ENCODE measurements at regions of chr15 and their contacts with region 1.

Region 1: GRCh38 chr15:78979456-78980320 is 34.8 kb upstream of the CTSH start:
- DNase-seq: peak; percentile 55
- H3K4me3 Mint-ChIP-seq: no peak overlapping the region
- H3K27ac Mint-ChIP-seq: no peak overlapping the region
- H3K4me1 Mint-ChIP-seq: peaks cover 11% of the 10 kb centered on the region
- H3K27me3 Mint-ChIP-seq: no peaks in the 10 kb centered on the region

Region 2: DNA sequence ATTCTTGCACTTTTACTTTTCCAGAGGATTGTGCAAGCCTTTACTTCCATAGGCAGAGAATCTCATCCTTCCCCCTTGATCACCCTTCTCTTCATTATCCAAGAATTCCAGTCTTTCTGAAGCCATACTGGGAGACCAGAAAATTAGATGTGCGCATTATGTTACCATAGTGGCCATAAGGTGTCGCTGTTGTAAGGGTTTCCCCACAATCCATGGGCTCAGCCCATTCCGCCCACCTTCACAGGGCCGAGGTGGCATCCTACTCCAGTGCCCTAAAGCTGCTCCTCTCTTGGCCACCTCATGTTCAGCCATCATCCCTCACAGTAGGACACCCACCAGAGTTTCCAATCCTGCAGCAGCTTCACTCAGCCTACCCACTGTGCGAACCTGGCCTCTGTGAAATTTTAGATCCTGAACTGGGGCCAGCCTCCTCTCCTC is 69.9 kb before region 1 on chr15:
- CTCF ChIA-PET with region 1: interaction called, 74 read pairs
- POLR2A ChIA-PET with region 1: no interaction called
- intact Hi-C with region 1: loop called (anchors 5 kb)
- DNase-seq: peak; percentile 47
- H3K4me3 Mint-ChIP-seq: no peak overlapping the region
- H3K27ac Mint-ChIP-seq: peak overlapping the region; percentile 53
- H3K4me1 Mint-ChIP-seq: peaks cover 23% of the 10 kb centered on the region
- H3K27me3 Mint-ChIP-seq: no peaks in the 10 kb centered on the region

Region 3: GRCh38 chr15:78938658-78939488 is 40.8 kb before region 1 on chr15:
- CTCF ChIA-PET with region 1: interaction called, 6 read pairs
- POLR2A ChIA-PET with region 1: no interaction called
- intact Hi-C with region 1: loop called (anchors 5 kb)
- DNase-seq: peak; percentile 71
- H3K4me3 Mint-ChIP-seq: peak overlapping the region; percentile 55
- H3K27ac Mint-ChIP-seq: peak overlapping the region; percentile 92
- H3K4me1 Mint-ChIP-seq: peaks cover 58% of the 10 kb centered on the region
- H3K27me3 Mint-ChIP-seq: no peaks in the 10 kb centered on the region

Region 4: DNA sequence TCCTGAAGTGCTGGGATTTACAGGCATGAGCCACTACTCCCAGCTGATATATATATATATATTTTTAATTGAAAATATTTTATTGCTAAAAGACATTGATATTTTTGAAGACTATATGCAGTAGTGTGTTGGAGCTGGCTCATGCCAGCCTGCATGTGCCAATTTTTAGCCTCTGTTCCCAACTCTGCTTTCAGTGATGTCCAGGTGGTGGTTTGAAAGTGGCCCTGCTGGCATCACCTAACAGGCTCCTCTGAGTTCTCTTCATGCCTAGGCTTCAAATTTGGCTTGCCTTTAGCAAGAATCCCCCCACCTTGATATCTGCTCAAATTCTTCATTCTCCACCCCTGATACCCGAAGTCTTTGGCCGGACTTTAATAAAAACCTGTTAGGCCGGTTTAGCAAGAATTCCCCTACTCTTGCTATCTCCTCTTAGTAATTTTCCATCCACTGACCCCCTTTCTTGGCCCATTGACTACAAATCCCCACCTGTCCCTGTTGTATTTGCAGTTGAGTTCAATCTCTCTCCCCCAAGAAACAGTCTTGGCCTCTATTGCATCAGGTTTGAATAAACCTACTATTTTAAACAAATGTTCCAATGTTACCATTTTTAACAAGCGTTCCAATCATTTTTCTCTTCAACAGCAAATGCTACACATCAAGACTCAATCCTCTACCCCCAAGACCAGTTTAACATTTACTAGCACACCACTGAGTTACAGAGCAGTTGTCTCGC is 11.0 kb before region 1 on chr15:
- CTCF ChIA-PET with region 1: interaction called, 15 read pairs
- POLR2A ChIA-PET with region 1: no interaction called
- intact Hi-C with region 1: no loop called
- DNase-seq: no peak
- H3K4me3 Mint-ChIP-seq: no peak overlapping the region
- H3K27ac Mint-ChIP-seq: no peak overlapping the region
- H3K4me1 Mint-ChIP-seq: no peaks in the 10 kb centered on the region
- H3K27me3 Mint-ChIP-seq: no peaks in the 10 kb centered on the region